ENCODE measurements at regions of chr3 and their contacts with region 1.

Region 1: GRCh38 chr3:110314512-110315114 is 757.0 kb upstream of the NECTIN3 start:
- DNase-seq: peak; percentile 57 to 67
- H3K4me3 ChIP-seq: no peak overlapping the region
- H3K4me3 Mint-ChIP-seq: no peak overlapping the region
- H3K27ac Mint-ChIP-seq: no peak overlapping the region
- H3K4me1 ChIP-seq: no peaks in the 10 kb centered on the region
- H3K4me1 Mint-ChIP-seq: no peaks in the 10 kb centered on the region
- H3K27me3 ChIP-seq: no peaks in the 10 kb centered on the region
- H3K27me3 Mint-ChIP-seq: no peaks in the 10 kb centered on the region
- CTCF ChIP-seq: peak; percentile 57 to 74

Region 2: GRCh38 chr3:109731620-109732473 is 582.8 kb before region 1 on chr3:
- CTCF ChIA-PET with region 1: no interaction called
- POLR2A ChIA-PET with region 1: no interaction called
- intact Hi-C with region 1: loop called (anchors 1 kb)
- DNase-seq: peak; percentile 46 to 52
- H3K4me3 ChIP-seq: no peak overlapping the region
- H3K4me3 Mint-ChIP-seq: no peak overlapping the region
- H3K27ac Mint-ChIP-seq: no peak overlapping the region
- H3K4me1 ChIP-seq: no peaks in the 10 kb centered on the region
- H3K4me1 Mint-ChIP-seq: no peaks in the 10 kb centered on the region
- H3K27me3 ChIP-seq: no peaks in the 10 kb centered on the region
- H3K27me3 Mint-ChIP-seq: no peaks in the 10 kb centered on the region
- CTCF ChIP-seq: peak; percentile 78 to 83

Region 3: DNA sequence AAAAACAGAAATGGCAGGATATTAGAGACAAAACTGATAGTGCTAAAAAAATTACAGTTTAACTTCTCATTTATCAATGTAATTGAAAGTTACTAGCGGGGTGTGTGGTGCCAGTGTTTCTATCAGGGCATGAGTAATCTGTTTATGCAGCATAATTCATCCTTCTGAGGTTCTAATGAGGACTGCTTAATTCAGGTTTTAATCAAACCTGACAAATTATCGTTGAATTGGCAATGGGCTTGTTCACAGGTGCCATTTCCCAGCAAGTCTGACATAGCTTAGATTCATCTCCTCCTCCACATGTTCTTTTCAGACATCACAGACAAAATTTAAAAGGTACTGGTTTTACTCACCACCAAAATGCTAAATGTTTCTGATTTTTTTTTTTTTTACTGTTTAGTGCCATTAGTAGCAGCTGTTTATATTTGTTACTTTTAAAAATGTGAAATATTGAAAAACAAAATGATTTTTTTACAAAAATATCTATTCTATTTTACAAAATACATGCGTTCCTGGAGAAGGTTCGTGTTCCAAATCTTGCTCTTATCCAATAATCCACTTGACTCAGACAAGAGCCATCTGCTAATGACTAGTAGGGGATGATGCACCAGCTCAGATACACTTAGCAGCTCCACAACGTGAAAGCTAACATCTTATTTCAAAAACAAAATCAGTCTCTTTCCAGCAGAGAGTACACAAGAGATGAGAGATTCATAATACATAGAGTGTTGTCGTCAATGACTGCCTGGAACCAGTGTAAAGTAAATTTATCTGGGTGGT is 529.6 kb before region 1 on chr3:
- CTCF ChIA-PET with region 1: no interaction called
- POLR2A ChIA-PET with region 1: no interaction called
- intact Hi-C with region 1: no loop called
- DNase-seq: no peak
- H3K4me3 ChIP-seq: no peak overlapping the region
- H3K4me3 Mint-ChIP-seq: no peak overlapping the region
- H3K27ac Mint-ChIP-seq: no peak overlapping the region
- H3K4me1 ChIP-seq: no peaks in the 10 kb centered on the region
- H3K4me1 Mint-ChIP-seq: no peaks in the 10 kb centered on the region
- H3K27me3 ChIP-seq: no peaks in the 10 kb centered on the region
- H3K27me3 Mint-ChIP-seq: peaks cover 3% of the 10 kb centered on the region
- CTCF ChIP-seq: no peak

Region 4: GRCh38 chr3:110106805-110107204 is 207.8 kb before region 1 on chr3:
- CTCF ChIA-PET with region 1: no interaction called
- POLR2A ChIA-PET with region 1: no interaction called
- intact Hi-C with region 1: no loop called
- DNase-seq: no peak
- H3K4me3 ChIP-seq: no peak overlapping the region
- H3K4me3 Mint-ChIP-seq: no peak overlapping the region
- H3K27ac Mint-ChIP-seq: no peak overlapping the region
- H3K4me1 ChIP-seq: no peaks in the 10 kb centered on the region
- H3K4me1 Mint-ChIP-seq: no peaks in the 10 kb centered on the region
- H3K27me3 ChIP-seq: no peaks in the 10 kb centered on the region
- H3K27me3 Mint-ChIP-seq: no peaks in the 10 kb centered on the region
- CTCF ChIP-seq: no peak

Region 5: GRCh38 chr3:110285027-110285426 is 29.6 kb before region 1 on chr3:
- CTCF ChIA-PET with region 1: no interaction called
- POLR2A ChIA-PET with region 1: no interaction called
- intact Hi-C with region 1: no loop called
- DNase-seq: no peak
- H3K4me3 ChIP-seq: no peak overlapping the region
- H3K4me3 Mint-ChIP-seq: no peak overlapping the region
- H3K27ac Mint-ChIP-seq: no peak overlapping the region
- H3K4me1 ChIP-seq: no peaks in the 10 kb centered on the region
- H3K4me1 Mint-ChIP-seq: no peaks in the 10 kb centered on the region
- H3K27me3 ChIP-seq: no peaks in the 10 kb centered on the region
- H3K27me3 Mint-ChIP-seq: peaks cover 4% of the 10 kb centered on the region
- CTCF ChIP-seq: no peak